WTC11 (cell line): ENCODE measurements at regions of chr22 and their contacts with region 1.

Region 1: GRCh38 chr22:29040385-29041275 is 21.0 kb downstream of the C22orf31 start:
- DNase-seq: peak; percentile 68
- ATAC-seq: peak; percentile 81
- H3K4me3 Mint-ChIP-seq: no peak overlapping the region
- H3K27ac Mint-ChIP-seq: peak overlapping the region; percentile 72
- H3K4me1 Mint-ChIP-seq: peaks cover 3% of the 10 kb centered on the region; the same call in 1 of the 2 replicates
- H3K27me3 Mint-ChIP-seq: no peaks in the 10 kb centered on the region
- CTCF ChIP-seq: peak; percentile 90

Region 2: DNA sequence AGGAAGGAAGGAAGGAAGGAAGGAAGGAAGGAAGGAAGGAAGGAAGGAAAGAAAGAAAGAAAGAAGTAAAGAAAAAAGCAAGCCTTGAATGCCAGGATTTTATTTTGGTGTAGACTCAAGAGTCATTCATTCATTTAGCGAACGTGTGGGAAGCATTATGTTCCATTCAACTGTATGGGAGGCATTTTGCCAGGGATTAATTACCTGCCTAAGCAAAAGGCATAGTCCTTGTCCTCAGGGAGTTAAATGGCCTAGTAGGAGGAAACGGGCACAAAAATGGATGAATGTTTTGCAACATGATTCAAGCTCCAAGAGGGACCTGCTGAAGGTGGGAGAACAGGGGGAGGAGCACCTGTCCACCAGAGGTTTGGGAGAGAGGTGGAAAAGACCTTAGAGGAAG is 173.4 kb before region 1 on chr22:
- CTCF ChIA-PET with region 1: interaction called, 16 read pairs
- POLR2A ChIA-PET with region 1: no interaction called
- DNase-seq: no peak
- ATAC-seq: no peak
- H3K4me3 Mint-ChIP-seq: no peak overlapping the region
- H3K27ac Mint-ChIP-seq: no peak overlapping the region
- H3K4me1 Mint-ChIP-seq: no peaks in the 10 kb centered on the region
- H3K27me3 Mint-ChIP-seq: no peaks in the 10 kb centered on the region
- CTCF ChIP-seq: no peak

Region 3: DNA sequence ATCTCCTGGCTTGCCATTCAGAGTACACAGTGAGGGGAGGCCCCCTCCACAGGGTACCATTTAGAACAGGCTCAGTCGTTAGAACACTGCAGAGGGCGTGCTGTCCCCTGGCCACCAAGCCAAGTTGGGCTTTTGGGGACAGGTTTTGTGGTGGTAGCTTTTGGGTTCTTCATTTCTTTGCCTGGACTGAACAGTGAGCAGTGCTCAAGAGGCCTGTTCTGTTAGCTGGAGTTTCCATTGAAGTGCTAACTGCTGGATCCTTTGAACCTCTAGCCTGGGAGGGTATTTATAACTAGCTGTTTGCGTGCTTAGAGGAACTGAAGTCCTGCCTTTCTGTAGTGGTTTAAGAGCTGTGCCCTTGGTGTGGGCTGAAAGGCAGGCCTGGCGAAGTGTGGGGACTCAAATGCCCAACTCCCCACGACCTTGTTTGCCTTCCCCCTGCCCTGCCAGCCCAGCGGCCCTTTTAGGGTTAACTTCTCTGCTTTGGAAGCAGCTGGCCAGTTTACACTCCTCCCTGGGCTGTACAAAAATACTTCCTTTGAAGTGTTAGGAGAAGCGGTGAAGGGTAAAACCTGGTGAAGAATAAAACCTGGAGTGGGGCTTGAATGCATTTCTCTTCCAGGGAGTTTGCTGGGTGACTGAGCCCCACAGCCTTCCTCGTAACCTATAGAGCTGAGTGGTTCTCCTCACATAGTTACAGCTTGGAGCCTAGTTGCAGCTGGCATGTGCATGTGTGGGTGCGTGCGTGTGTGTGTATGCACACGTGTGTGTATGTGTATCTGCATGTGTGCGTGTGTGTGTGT is 122.7 kb before region 1 on chr22:
- CTCF ChIA-PET with region 1: interaction called, 22 read pairs
- POLR2A ChIA-PET with region 1: no interaction called
- DNase-seq: no peak
- ATAC-seq: peak; percentile 69
- H3K4me3 Mint-ChIP-seq: peak overlapping the region; percentile 1
- H3K27ac Mint-ChIP-seq: peak overlapping the region; percentile 52; the same call in 1 of the 2 replicates
- H3K4me1 Mint-ChIP-seq: peaks cover 62% of the 10 kb centered on the region
- H3K27me3 Mint-ChIP-seq: no peaks in the 10 kb centered on the region
- CTCF ChIP-seq: no peak

Region 4: GRCh38 chr22:28943501-28943879 is 97.1 kb before region 1 on chr22:
- CTCF ChIA-PET with region 1: interaction called, 15 read pairs
- POLR2A ChIA-PET with region 1: no interaction called
- DNase-seq: no peak
- ATAC-seq: no peak
- H3K4me3 Mint-ChIP-seq: no peak overlapping the region
- H3K27ac Mint-ChIP-seq: peak overlapping the region; percentile 76
- H3K4me1 Mint-ChIP-seq: peaks cover 52% of the 10 kb centered on the region
- H3K27me3 Mint-ChIP-seq: no peaks in the 10 kb centered on the region
- CTCF ChIP-seq: no peak

Region 5: GRCh38 chr22:28963362-28963761 is 77.3 kb before region 1 on chr22:
- CTCF ChIA-PET with region 1: interaction called, 17 read pairs
- POLR2A ChIA-PET with region 1: no interaction called
- DNase-seq: no peak
- ATAC-seq: no peak
- H3K4me3 Mint-ChIP-seq: no peak overlapping the region
- H3K27ac Mint-ChIP-seq: peak overlapping the region; percentile 88; the same call in 1 of the 2 replicates
- H3K4me1 Mint-ChIP-seq: peaks cover 55% of the 10 kb centered on the region
- H3K27me3 Mint-ChIP-seq: no peaks in the 10 kb centered on the region
- CTCF ChIP-seq: no peak

Region 6: GRCh38 chr22:29062286-29062821 is 21.7 kb after region 1 on chr22:
- CTCF ChIA-PET with region 1: interaction called, 24 read pairs
- POLR2A ChIA-PET with region 1: interaction called, 4 read pairs
- DNase-seq: no peak
- ATAC-seq: peak; percentile 73
- H3K4me3 Mint-ChIP-seq: no peak overlapping the region
- H3K27ac Mint-ChIP-seq: no peak overlapping the region
- H3K4me1 Mint-ChIP-seq: peaks cover 22% of the 10 kb centered on the region
- H3K27me3 Mint-ChIP-seq: no peaks in the 10 kb centered on the region; the same call in 1 of the 2 replicates
- CTCF ChIP-seq: no peak